ENCODE measurements at regions of chr4 and their contacts with region 1.

Region 1: GRCh38 chr4:24105183-24106038 is 215.6 kb upstream of the PPARGC1A start:
- DNase-seq: peak; percentile 96
- H3K4me3 Mint-ChIP-seq: peak overlapping the region; percentile 51
- H3K27ac Mint-ChIP-seq: peak overlapping the region; percentile 98
- H3K4me1 Mint-ChIP-seq: peaks cover 26% of the 10 kb centered on the region
- H3K27me3 Mint-ChIP-seq: no peaks in the 10 kb centered on the region
- CTCF ChIP-seq: no peak

Region 2: GRCh38 chr4:24126776-24127175 is 21.4 kb after region 1 on chr4:
- CTCF ChIA-PET with region 1: no interaction called
- POLR2A ChIA-PET with region 1: interaction called, 20 read pairs
- intact Hi-C with region 1: no loop called
- DNase-seq: no peak
- H3K4me3 Mint-ChIP-seq: no peak overlapping the region
- H3K27ac Mint-ChIP-seq: no peak overlapping the region
- H3K4me1 Mint-ChIP-seq: peaks cover 17% of the 10 kb centered on the region
- H3K27me3 Mint-ChIP-seq: no peaks in the 10 kb centered on the region
- CTCF ChIP-seq: no peak

Region 3: DNA sequence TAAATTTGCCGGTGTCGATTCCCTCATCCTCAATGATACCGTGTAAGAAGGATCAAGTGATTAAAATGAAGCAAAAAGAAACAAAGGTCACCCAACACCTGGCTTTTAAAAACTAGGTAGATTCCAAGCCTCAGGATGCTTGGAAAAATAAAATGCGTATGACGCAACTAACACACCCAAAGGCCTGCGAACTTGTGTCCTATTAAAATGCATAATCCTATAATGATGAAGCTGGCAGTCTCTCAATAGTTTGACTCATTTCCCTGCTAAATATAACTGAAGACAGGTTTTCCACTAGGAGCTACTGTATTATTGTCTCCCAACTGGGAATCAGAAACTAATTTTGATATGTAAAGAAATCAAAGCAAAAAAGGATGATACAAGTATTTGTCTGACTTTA is 215.7 kb after region 1 on chr4:
- CTCF ChIA-PET with region 1: no interaction called
- POLR2A ChIA-PET with region 1: interaction called, 8 read pairs
- intact Hi-C with region 1: loop called (anchors 10 kb)
- DNase-seq: peak; percentile 89
- H3K4me3 Mint-ChIP-seq: no peak overlapping the region
- H3K27ac Mint-ChIP-seq: peak overlapping the region; percentile 64
- H3K4me1 Mint-ChIP-seq: peaks cover 39% of the 10 kb centered on the region
- H3K27me3 Mint-ChIP-seq: no peaks in the 10 kb centered on the region
- CTCF ChIP-seq: no peak

Measured in MCF 10A (cell line).